PC-9 (cell line): ENCODE measurements at regions of chr11 and their contacts with region 1.

Region 1: GRCh38 chr11:117232092-117232878 is at the start of gene RNF214:
- DNase-seq: peak; percentile 51 to 73
- H3K4me3 ChIP-seq: peak within 1 kb of the TSS; percentile 99
- H3K27ac ChIP-seq: no peak within 1 kb of the TSS
- H3K4me1 ChIP-seq: peaks cover 25% of the 10 kb centered on the region
- H3K27me3 ChIP-seq: no peaks in the 10 kb centered on the region
- CTCF ChIP-seq: peak; percentile 92
- total RNA-seq, gene RNF214: 27.2 and 28.1 TPM in 2 replicates

Region 2: DNA sequence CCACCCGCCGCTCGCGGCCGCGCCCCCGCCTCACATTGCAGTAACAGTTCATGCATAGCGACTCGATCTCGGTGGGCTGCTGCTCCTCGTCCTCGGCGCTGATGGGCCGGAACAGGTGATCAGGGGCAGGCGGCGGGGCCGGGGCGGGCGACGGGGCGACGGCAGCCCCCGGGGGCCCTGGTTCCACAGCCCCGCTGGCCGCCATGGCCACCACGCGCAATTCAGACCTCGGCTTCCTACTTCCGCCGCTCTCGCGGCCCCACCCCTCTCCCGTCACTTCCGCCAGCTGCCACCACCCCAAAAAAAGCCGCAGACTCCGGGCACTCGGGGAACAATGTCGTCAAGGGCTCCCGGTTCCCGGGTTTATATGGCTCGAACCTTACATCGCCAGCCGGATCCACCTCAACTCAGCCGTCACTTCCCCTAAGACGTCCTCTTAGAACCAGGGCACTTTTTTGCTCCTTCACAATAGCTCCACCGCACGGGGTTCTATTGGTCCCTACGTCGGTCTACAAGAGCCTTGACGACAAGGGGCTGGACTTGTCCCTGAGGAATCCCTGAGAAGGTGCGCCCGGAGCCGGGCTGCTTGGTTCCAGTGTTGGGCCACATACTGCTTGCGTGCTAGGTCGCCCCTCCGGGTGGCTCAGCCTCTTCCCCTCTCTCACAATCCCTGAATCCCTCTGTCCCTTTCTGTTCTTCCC is 444.3 kb before region 1 on chr11 and contains the start of gene ZPR1:
- CTCF ChIA-PET with region 1: no interaction called
- POLR2A ChIA-PET with region 1: no interaction called
- intact Hi-C with region 1: loop called (anchors 5 kb)
- DNase-seq: peak; percentile 68 to 69
- H3K4me3 ChIP-seq: peak within 1 kb of the TSS; percentile 76
- H3K27ac ChIP-seq: no peak within 1 kb of the TSS; the same call in 1 of the 2 replicates
- H3K4me1 ChIP-seq: peaks cover 17% of the 10 kb centered on the region
- H3K27me3 ChIP-seq: no peaks in the 10 kb centered on the region
- CTCF ChIP-seq: no peak
- total RNA-seq, gene ZPR1: 29.6 and 33.0 TPM in 2 replicates

Region 3: DNA sequence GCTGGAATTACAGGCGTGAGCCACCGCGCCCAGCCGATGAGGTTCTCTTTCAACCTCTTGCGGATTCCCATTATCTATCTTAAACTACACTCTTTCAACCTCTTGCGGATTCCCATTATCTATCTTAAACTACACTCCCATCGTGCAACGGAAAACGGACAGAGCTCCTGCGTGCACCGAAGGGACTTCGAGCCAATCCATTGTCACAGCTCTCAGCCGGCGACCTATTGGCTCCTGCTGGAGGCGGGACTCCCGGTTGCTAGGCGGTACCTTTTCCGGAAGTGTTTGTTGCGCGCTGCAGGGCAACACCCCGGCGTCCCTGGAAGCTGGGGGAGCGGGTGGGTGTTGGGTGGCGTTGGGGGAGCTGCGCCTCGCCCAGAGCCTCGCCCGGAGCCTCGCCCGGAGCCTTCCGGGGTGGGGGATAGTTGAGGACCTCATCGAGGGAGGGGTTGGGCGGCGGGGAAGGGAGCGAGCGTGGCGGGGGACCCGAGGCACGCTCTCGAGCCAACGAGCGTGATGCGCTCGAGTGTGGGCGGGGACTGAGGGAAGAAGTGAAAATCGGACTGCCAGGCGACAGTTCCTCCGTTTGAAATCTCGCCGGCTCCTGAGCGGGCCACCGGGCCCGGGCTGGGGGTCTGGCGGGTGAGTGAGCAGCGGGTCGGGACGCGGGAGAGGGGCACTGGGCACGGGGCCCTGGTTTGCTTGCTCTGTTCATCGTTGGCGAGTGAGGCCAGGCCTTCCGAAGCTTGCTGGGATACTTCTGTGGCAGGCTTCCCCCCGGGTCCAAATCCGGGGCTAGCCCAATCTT is 95.5 kb after region 1 on chr11 and contains the start of gene CEP164:
- CTCF ChIA-PET with region 1: no interaction called
- POLR2A ChIA-PET with region 1: no interaction called
- intact Hi-C with region 1: loop called (anchors 2 kb)
- DNase-seq: peak; percentile 92 to 95
- H3K4me3 ChIP-seq: peak within 1 kb of the TSS; percentile 75
- H3K27ac ChIP-seq: peak within 1 kb of the TSS; percentile 44
- H3K4me1 ChIP-seq: peaks cover 13% of the 10 kb centered on the region
- H3K27me3 ChIP-seq: no peaks in the 10 kb centered on the region
- CTCF ChIP-seq: no peak
- total RNA-seq, gene CEP164: 33.0 and 33.9 TPM in 2 replicates

Region 4: GRCh38 chr11:117492578-117493251 is 260.4 kb after region 1 on chr11:
- CTCF ChIA-PET with region 1: no interaction called
- POLR2A ChIA-PET with region 1: no interaction called
- intact Hi-C with region 1: no loop called
- DNase-seq: no peak
- H3K4me3 ChIP-seq: no peak overlapping the region
- H3K27ac ChIP-seq: no peak overlapping the region
- H3K4me1 ChIP-seq: no peaks in the 10 kb centered on the region
- H3K27me3 ChIP-seq: peaks cover 100% of the 10 kb centered on the region
- CTCF ChIP-seq: no peak